Endothelial cell of umbilical vein (primary cell): ENCODE measurements at regions of chr2 and their contacts with region 1.

Region 1: GRCh38 chr2:181457121-181457740 is at the start of gene ITGA4:
- DNase-seq: peak; percentile 47
- H3K4me3 ChIP-seq: peak within 1 kb of the TSS; percentile 5 to 43 (median 41)
- H3K27ac ChIP-seq: no peak within 1 kb of the TSS
- H3K4me1 ChIP-seq: peaks cover 7% of the 10 kb centered on the region
- H3K27me3 ChIP-seq: peaks cover 15 to 53% of the 10 kb centered on the region in 2 experiments
- CTCF ChIP-seq: peak; percentile 65 to 76
- POLR2A ChIP-seq: no peak
- total RNA-seq, gene ITGA4: 2.8 TPM in 2 replicates

Region 2: GRCh38 chr2:180907731-180908130 is 549.5 kb before region 1 on chr2:
- CTCF ChIA-PET with region 1: no interaction called
- POLR2A ChIA-PET with region 1: no interaction called
- dilution Hi-C with region 1: no loop called
- intact Hi-C with region 1: no loop called
- DNase-seq: no peak
- H3K4me3 ChIP-seq: no peak overlapping the region
- H3K27ac ChIP-seq: no peak overlapping the region
- H3K4me1 ChIP-seq: no peaks in the 10 kb centered on the region
- H3K27me3 ChIP-seq: no peaks in the 10 kb centered on the region
- CTCF ChIP-seq: no peak
- POLR2A ChIP-seq: no peak

Region 3: DNA sequence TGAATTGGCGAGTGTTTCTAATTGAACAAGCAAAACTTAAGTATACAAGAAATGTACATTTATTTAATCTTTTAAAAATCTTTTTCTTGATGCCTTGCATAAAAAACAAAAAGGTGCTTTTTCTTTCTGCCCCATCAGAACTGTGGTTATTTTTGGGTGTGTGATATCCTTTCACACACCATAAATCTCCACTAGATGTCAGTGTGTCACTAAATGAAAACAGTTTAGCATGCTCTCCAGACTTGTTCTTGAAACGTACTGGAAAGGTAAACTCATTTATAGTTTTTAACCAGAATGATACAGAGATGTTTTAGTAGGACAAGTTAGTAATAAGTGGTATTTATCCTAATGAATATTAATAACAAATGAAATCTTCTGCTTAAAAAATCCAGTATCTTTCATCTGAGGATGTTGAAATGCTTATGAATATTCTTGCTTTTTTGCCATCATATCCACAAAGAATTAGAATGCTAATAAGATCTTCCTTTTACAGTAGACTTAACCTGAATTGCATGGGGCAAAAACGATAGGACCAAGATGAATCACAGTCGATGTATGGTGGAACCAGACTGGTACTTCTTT is 380.0 kb before region 1 on chr2:
- CTCF ChIA-PET with region 1: no interaction called
- POLR2A ChIA-PET with region 1: no interaction called
- dilution Hi-C with region 1: no loop called
- intact Hi-C with region 1: loop called (anchors 1 kb)
- DNase-seq: peak; percentile 56
- H3K4me3 ChIP-seq: no peak overlapping the region
- H3K27ac ChIP-seq: no peak overlapping the region
- H3K4me1 ChIP-seq: peaks cover 21% of the 10 kb centered on the region
- H3K27me3 ChIP-seq: no peaks in the 10 kb centered on the region
- CTCF ChIP-seq: peak; percentile 38 to 47
- POLR2A ChIP-seq: no peak